SK-N-SH (cell line): ENCODE measurements at regions of chr10 and their contacts with region 1.

Region 1: GRCh38 chr10:123994417-123995081 is 98.8 kb downstream of the CHST15 start:
- DNase-seq: peak; percentile 96
- H3K4me3 ChIP-seq: peak overlapping the region in 1 of 2 experiments; percentile 23; a peak in 1 of 4 replicates
- H3K27ac ChIP-seq: no peak overlapping the region
- H3K4me1 ChIP-seq: no peaks in the 10 kb centered on the region; a peak in 1 of 4 replicates
- H3K27me3 ChIP-seq: no peaks in the 10 kb centered on the region
- CTCF ChIP-seq: peak; percentile 71
- EP300 ChIP-seq: no peak
- RAD21 ChIP-seq: peak; percentile 92

Region 2: GRCh38 chr10:123743976-123744411 is 250.6 kb before region 1 on chr10:
- CTCF ChIA-PET with region 1: no interaction called
- POLR2A ChIA-PET with region 1: no interaction called
- DNase-seq: peak; percentile 72
- H3K4me3 ChIP-seq: no peak overlapping the region
- H3K27ac ChIP-seq: no peak overlapping the region; a peak in 1 of 4 replicates
- H3K4me1 ChIP-seq: peaks cover 0 to 24% of the 10 kb centered on the region in 2 experiments; a peak in 2 of 4 replicates
- H3K27me3 ChIP-seq: no peaks in the 10 kb centered on the region
- CTCF ChIP-seq: no peak
- EP300 ChIP-seq: peak in 1 of 2 experiments; percentile 75; a peak in 2 of 4 replicates
- RAD21 ChIP-seq: 0 out of 2 replicates have a peak, but pooled peaks have one; percentile 12

Region 3: GRCh38 chr10:124019886-124020797 is 25.6 kb after region 1 on chr10:
- CTCF ChIA-PET with region 1: interaction called, 17 read pairs
- POLR2A ChIA-PET with region 1: no interaction called
- DNase-seq: no peak
- H3K4me3 ChIP-seq: no peak overlapping the region
- H3K27ac ChIP-seq: no peak overlapping the region
- H3K4me1 ChIP-seq: no peaks in the 10 kb centered on the region
- H3K27me3 ChIP-seq: no peaks in the 10 kb centered on the region
- CTCF ChIP-seq: no peak
- EP300 ChIP-seq: no peak
- RAD21 ChIP-seq: no peak

Region 4: DNA sequence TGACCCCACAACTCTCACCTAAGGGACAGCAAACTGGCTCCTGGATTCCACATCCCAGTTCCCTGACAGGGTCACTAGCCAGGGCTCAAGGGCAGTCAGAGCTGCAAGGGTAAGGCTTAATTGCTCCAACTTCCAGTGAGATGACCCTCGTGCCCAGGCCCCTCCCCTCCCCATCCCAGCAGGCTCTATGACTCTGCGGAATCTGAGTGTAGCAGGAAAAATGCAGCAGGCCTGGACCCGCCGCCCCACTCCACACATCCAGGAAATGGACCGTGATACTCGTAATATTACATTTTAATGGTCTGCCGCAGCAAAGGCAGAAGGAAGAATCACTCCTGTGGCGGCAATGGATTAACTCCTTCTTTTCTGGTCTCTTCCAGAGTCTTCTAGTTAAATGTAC is 190.5 kb after region 1 on chr10:
- CTCF ChIA-PET with region 1: interaction called, 10 read pairs
- POLR2A ChIA-PET with region 1: no interaction called
- DNase-seq: no peak
- H3K4me3 ChIP-seq: no peak overlapping the region
- H3K27ac ChIP-seq: no peak overlapping the region
- H3K4me1 ChIP-seq: no peaks in the 10 kb centered on the region
- H3K27me3 ChIP-seq: no peaks in the 10 kb centered on the region
- CTCF ChIP-seq: no peak
- EP300 ChIP-seq: no peak
- RAD21 ChIP-seq: no peak

Region 5: GRCh38 chr10:124249812-124250432 is 255.4 kb after region 1 on chr10:
- CTCF ChIA-PET with region 1: interaction called, 52 read pairs
- POLR2A ChIA-PET with region 1: no interaction called
- DNase-seq: no peak
- H3K4me3 ChIP-seq: no peak overlapping the region
- H3K27ac ChIP-seq: no peak overlapping the region
- H3K4me1 ChIP-seq: peaks cover 0 to 11% of the 10 kb centered on the region in 2 experiments; a peak in 1 of 4 replicates
- H3K27me3 ChIP-seq: no peaks in the 10 kb centered on the region
- CTCF ChIP-seq: no peak
- EP300 ChIP-seq: no peak
- RAD21 ChIP-seq: no peak

Region 6: GRCh38 chr10:124349231-124349995 is 354.9 kb after region 1 on chr10:
- CTCF ChIA-PET with region 1: interaction called, 31 read pairs
- POLR2A ChIA-PET with region 1: no interaction called
- DNase-seq: no peak
- H3K4me3 ChIP-seq: no peak overlapping the region
- H3K27ac ChIP-seq: no peak overlapping the region
- H3K4me1 ChIP-seq: peaks cover 0 to 20% of the 10 kb centered on the region in 2 experiments; a peak in 1 of 4 replicates
- H3K27me3 ChIP-seq: no peaks in the 10 kb centered on the region
- CTCF ChIP-seq: no peak
- EP300 ChIP-seq: no peak
- RAD21 ChIP-seq: no peak

Region 7: GRCh38 chr10:124418726-124419501 is 424.4 kb after region 1 on chr10 and contains the start of gene OAT:
- CTCF ChIA-PET with region 1: interaction called, 10 read pairs
- POLR2A ChIA-PET with region 1: no interaction called
- DNase-seq: peak; percentile 99
- H3K4me3 ChIP-seq: peak within 1 kb of the TSS; percentile 76 to 87
- H3K27ac ChIP-seq: peak within 1 kb of the TSS; percentile 65 to 70
- H3K4me1 ChIP-seq: peaks cover 0 to 6% of the 10 kb centered on the region in 2 experiments; a peak in 1 of 4 replicates
- H3K27me3 ChIP-seq: peaks cover 14% of the 10 kb centered on the region; the same call in 1 of the 2 replicates
- CTCF ChIP-seq: peak; percentile 11
- EP300 ChIP-seq: no peak
- RAD21 ChIP-seq: 0 out of 2 replicates have a peak, but pooled peaks have one; percentile 1
- polyA plus RNA-seq, gene OAT: 65.7 and 97.6 TPM in 2 replicates